ENCODE measurements at regions of chr18 and their contacts with region 1.

Region 1: GRCh38 chr18:32893915-32894314 is 121.1 kb upstream of the KLHL14 start:
- DNase-seq: no peak
- ATAC-seq: no peak
- H3K4me3 ChIP-seq: no peak overlapping the region
- H3K27ac ChIP-seq: no peak overlapping the region
- H3K4me1 ChIP-seq: no peaks in the 10 kb centered on the region
- H3K27me3 ChIP-seq: no peaks in the 10 kb centered on the region
- CTCF ChIP-seq: peak in 2 of 3 experiments; percentile 12 to 14; a peak in 1 of 6 replicates
- EP300 ChIP-seq: no peak
- POLR2A ChIP-seq: no peak
- RAD21 ChIP-seq: no peak

Region 2: DNA sequence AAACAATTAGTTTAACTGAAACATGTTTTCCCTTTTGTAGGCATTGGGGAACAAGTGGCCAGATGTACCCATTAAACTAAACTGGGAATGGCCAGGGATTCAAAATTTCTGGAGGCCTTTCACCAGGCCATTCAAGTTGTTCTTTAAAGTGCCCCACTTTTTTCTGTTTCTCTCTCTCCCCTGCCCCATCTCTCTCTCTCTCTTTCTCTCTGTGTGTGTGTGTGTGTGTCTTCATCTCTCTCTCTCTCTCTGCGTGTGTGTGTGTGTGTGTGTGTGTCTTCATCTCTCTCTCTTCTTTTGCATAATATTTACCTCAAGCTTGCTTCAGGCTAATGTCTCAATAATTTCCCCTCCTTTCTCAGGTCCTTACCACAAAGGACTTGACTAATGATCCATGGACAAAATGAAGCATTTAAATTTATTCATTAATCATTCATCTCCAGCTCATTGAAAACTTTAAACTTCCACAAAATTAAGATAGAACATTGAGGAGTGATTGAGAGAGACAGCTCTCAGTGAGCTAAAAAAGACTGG is 43.2 kb after region 1 on chr18:
- CTCF ChIA-PET with region 1: no interaction called
- POLR2A ChIA-PET with region 1: no interaction called
- RAD21 ChIA-PET with region 1: no interaction called
- SMC1A ChIA-PET with region 1: no interaction called
- in situ Hi-C with region 1: no loop called
- intact Hi-C with region 1: loop called (anchors 5 kb)
- DNase-seq: no peak
- ATAC-seq: no peak
- H3K4me3 ChIP-seq: no peak overlapping the region
- H3K27ac ChIP-seq: no peak overlapping the region
- H3K4me1 ChIP-seq: no peaks in the 10 kb centered on the region
- H3K27me3 ChIP-seq: no peaks in the 10 kb centered on the region
- CTCF ChIP-seq: no peak
- EP300 ChIP-seq: no peak
- POLR2A ChIP-seq: no peak
- RAD21 ChIP-seq: no peak

Measured in GM12878 (cell line).